Activated CD4-positive, alpha-beta T cell treated with anti-CD3 and anti-CD28 coated beads for 36 hours (primary cell): ENCODE measurements at regions of chr1 and their contacts with region 1.

Region 1: DNA sequence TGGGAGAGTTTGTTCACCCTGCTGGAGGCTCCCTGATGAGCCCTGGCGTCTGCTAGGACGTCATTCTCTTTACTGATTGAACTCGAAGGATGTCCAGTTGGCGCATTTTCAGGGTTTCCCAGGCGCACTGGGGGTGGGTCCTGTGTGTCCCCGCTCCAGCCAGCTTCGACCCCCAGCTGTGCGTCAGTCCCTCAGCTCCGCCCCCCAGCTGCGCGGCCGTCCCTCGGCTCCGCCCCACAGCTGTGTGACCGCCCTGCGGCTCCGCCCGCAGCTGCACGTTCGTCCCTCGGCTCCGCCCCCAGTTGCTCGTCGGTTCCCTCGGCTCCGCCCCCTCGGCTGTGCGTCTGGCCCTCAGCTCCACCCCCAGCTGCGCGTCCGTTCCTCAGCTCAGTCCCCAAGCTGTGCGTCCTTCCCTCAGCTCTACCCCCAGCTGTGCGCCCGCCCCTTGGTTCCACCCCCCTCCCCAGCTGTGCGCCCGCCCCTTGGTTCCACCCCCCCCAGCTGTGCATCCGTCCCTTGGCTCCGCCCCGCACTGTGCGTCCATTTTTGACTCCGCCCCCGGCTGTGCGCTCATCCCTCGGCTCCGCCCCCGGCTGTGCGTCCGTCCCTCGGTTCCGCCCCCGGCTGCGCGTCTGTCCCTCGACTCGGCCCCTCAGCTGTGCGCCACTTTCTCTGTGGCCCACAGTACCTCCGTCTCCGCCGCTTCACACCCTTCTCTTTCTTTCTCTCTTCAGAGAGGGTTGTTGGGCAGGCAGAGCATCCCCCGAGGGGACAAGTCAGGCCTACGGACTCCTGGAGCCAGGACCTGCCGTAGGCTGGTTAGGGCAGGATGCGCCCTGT is 61.3 kb downstream of the FAAP20 start:
- DNase-seq: peak; percentile 99
- ATAC-seq: peak; percentile 94
- H3K4me3 Mint-ChIP-seq: peak overlapping the region; percentile 68
- H3K27ac Mint-ChIP-seq: peak overlapping the region; percentile 82
- H3K4me1 Mint-ChIP-seq: peaks cover 14% of the 10 kb centered on the region
- H3K27me3 Mint-ChIP-seq: no peaks in the 10 kb centered on the region

Region 2: GRCh38 chr1:1788646-1789431 is 344.4 kb before region 1 on chr1:
- CTCF ChIA-PET with region 1: no interaction called
- POLR2A ChIA-PET with region 1: no interaction called
- intact Hi-C with region 1: no loop called
- DNase-seq: peak; percentile 56
- ATAC-seq: no peak
- H3K4me3 Mint-ChIP-seq: no peak overlapping the region
- H3K27ac Mint-ChIP-seq: no peak overlapping the region
- H3K4me1 Mint-ChIP-seq: no peaks in the 10 kb centered on the region
- H3K27me3 Mint-ChIP-seq: no peaks in the 10 kb centered on the region

Region 3: GRCh38 chr1:1906185-1907097 is 226.8 kb before region 1 on chr1:
- CTCF ChIA-PET with region 1: interaction called, 4 read pairs
- POLR2A ChIA-PET with region 1: interaction called, 3 read pairs
- intact Hi-C with region 1: loop called in 1 of 2 experiments (anchors 1 kb)
- DNase-seq: peak; percentile 86
- ATAC-seq: peak; percentile 52
- H3K4me3 Mint-ChIP-seq: peak overlapping the region; percentile 0
- H3K27ac Mint-ChIP-seq: no peak overlapping the region
- H3K4me1 Mint-ChIP-seq: peaks cover 14% of the 10 kb centered on the region
- H3K27me3 Mint-ChIP-seq: no peaks in the 10 kb centered on the region

Region 4: GRCh38 chr1:2009101-2010053 is 123.9 kb before region 1 on chr1:
- CTCF ChIA-PET with region 1: no interaction called
- POLR2A ChIA-PET with region 1: no interaction called
- intact Hi-C with region 1: no loop called
- DNase-seq: no peak
- ATAC-seq: no peak
- H3K4me3 Mint-ChIP-seq: no peak overlapping the region
- H3K27ac Mint-ChIP-seq: no peak overlapping the region
- H3K4me1 Mint-ChIP-seq: no peaks in the 10 kb centered on the region
- H3K27me3 Mint-ChIP-seq: peaks cover 17% of the 10 kb centered on the region

Region 5: GRCh38 chr1:2148691-2149090 is 15.4 kb after region 1 on chr1:
- CTCF ChIA-PET with region 1: no interaction called
- POLR2A ChIA-PET with region 1: no interaction called
- intact Hi-C with region 1: loop called in 1 of 2 experiments (anchors 1 kb)
- DNase-seq: peak; percentile 72
- ATAC-seq: peak; percentile 79
- H3K4me3 Mint-ChIP-seq: no peak overlapping the region
- H3K27ac Mint-ChIP-seq: no peak overlapping the region
- H3K4me1 Mint-ChIP-seq: peaks cover 10% of the 10 kb centered on the region
- H3K27me3 Mint-ChIP-seq: no peaks in the 10 kb centered on the region

Region 6: GRCh38 chr1:2205191-2205952 is 72.1 kb after region 1 on chr1:
- CTCF ChIA-PET with region 1: interaction called, 3 read pairs
- POLR2A ChIA-PET with region 1: no interaction called
- intact Hi-C with region 1: loop called (anchors 1 to 2 kb)
- DNase-seq: peak; percentile 98
- ATAC-seq: peak; percentile 88
- H3K4me3 Mint-ChIP-seq: peak overlapping the region; percentile 51
- H3K27ac Mint-ChIP-seq: no peak overlapping the region
- H3K4me1 Mint-ChIP-seq: peaks cover 3% of the 10 kb centered on the region
- H3K27me3 Mint-ChIP-seq: no peaks in the 10 kb centered on the region

Region 7: GRCh38 chr1:2300851-2301606 is 167.8 kb after region 1 on chr1:
- CTCF ChIA-PET with region 1: no interaction called
- POLR2A ChIA-PET with region 1: no interaction called
- intact Hi-C with region 1: loop called in 1 of 2 experiments (anchors 1 kb)
- DNase-seq: peak; percentile 95
- ATAC-seq: peak; percentile 81
- H3K4me3 Mint-ChIP-seq: peak overlapping the region; percentile 79
- H3K27ac Mint-ChIP-seq: peak overlapping the region; percentile 95
- H3K4me1 Mint-ChIP-seq: peaks cover 59% of the 10 kb centered on the region
- H3K27me3 Mint-ChIP-seq: no peaks in the 10 kb centered on the region

Region 8: DNA sequence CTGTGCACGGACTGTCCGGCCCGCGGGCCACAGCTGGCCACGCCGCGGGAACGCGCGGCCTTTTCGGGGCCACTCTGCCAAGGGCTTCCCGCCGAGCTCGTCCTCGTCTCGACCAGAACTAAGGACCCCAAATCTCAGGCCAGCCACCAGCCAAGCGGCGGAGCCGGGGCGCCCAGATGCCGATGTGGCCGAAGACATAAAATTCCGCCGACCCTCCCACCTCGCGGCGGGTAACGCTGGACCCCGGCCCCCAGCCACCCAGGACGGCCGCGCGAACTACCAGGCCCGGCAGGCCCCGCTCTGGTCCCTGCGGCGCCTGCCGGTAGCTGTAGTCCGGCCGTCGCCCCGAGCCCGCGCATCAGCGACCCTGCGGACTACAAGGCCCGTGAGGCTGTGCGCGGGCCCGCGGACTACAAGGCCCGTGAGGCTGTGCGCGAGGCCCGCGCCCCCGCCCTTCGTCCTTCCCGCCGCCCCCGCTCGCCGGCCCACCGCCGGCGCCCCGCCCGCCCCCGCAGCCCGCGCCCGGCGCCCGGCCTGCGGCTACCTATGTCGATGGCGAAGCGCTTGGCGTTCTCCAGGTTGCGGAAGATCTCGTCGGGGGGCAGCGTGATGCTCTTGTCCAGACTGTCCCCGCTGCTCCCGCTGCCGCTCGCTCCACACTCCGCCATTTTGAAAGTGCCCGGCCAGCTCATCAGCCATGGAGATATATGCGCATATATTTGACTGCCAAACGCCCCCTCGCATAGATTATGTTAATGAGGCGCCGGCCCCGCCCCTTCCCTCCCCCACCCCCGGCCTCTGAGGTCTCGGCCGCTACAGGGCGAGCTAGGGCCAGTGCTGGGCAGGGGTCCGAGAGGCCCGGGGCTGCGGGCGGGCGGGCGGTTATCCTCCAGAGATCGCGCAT is 392.9 kb after region 1 on chr1 and contains the start of gene PANK4:
- CTCF ChIA-PET with region 1: no interaction called
- POLR2A ChIA-PET with region 1: no interaction called
- intact Hi-C with region 1: loop called in 1 of 2 experiments (anchors 1 kb)
- DNase-seq: peak; percentile 96
- ATAC-seq: peak; percentile 87
- H3K4me3 Mint-ChIP-seq: peak within 1 kb of the TSS; percentile 77
- H3K27ac Mint-ChIP-seq: peak within 1 kb of the TSS; percentile 91
- H3K4me1 Mint-ChIP-seq: peaks cover 43% of the 10 kb centered on the region
- H3K27me3 Mint-ChIP-seq: peaks cover 3% of the 10 kb centered on the region
- total RNA-seq, gene PANK4: 32.4 to 39.2 TPM